CD8-positive, alpha-beta T cell (primary cell): ENCODE measurements at regions of chr16 and their contacts with region 1.

Region 1: GRCh38 chr16:1983544-1984346 is at the start of gene GFER:
- DNase-seq: peak; percentile 29 to 84 (median 57)
- ATAC-seq: peak; percentile 79
- H3K4me3 ChIP-seq: peak within 1 kb of the TSS; percentile 60 to 71
- H3K4me3 Mint-ChIP-seq: peak within 1 kb of the TSS; percentile 82
- H3K27ac ChIP-seq: peak within 1 kb of the TSS; percentile 48 to 64
- H3K27ac Mint-ChIP-seq: peak within 1 kb of the TSS; percentile 66
- H3K4me1 ChIP-seq: peaks cover 15% of the 10 kb centered on the region
- H3K4me1 Mint-ChIP-seq: peaks cover 16% of the 10 kb centered on the region
- H3K27me3 ChIP-seq: peaks cover 12 to 30% of the 10 kb centered on the region in 2 experiments
- H3K27me3 Mint-ChIP-seq: peaks cover 22% of the 10 kb centered on the region
- CTCF ChIP-seq: no peak
- total RNA-seq, gene GFER: 15.6 to 16.1 TPM

Region 2: GRCh38 chr16:1863681-1864460 is 119.9 kb before region 1 on chr16:
- CTCF ChIA-PET with region 1: no interaction called
- POLR2A ChIA-PET with region 1: no interaction called
- intact Hi-C with region 1: no loop called
- DNase-seq: peak in 2 of 9 experiments; percentile 51 to 70
- ATAC-seq: peak; percentile 34
- H3K4me3 ChIP-seq: no peak overlapping the region
- H3K4me3 Mint-ChIP-seq: no peak overlapping the region
- H3K27ac ChIP-seq: no peak overlapping the region
- H3K27ac Mint-ChIP-seq: no peak overlapping the region
- H3K4me1 ChIP-seq: no peaks in the 10 kb centered on the region
- H3K4me1 Mint-ChIP-seq: no peaks in the 10 kb centered on the region
- H3K27me3 ChIP-seq: peaks cover 2 to 8% of the 10 kb centered on the region in 2 experiments
- H3K27me3 Mint-ChIP-seq: peaks cover 11% of the 10 kb centered on the region
- CTCF ChIP-seq: peak; percentile 81

Region 3: GRCh38 chr16:1959269-1960049 is 24.3 kb before region 1 on chr16 and contains the start of gene NDUFB10:
- CTCF ChIA-PET with region 1: no interaction called
- POLR2A ChIA-PET with region 1: interaction called, 15 read pairs
- intact Hi-C with region 1: loop called in 1 of 2 experiments (anchors 1 kb)
- DNase-seq: peak; percentile 80 to 96 (median 92)
- ATAC-seq: peak; percentile 86
- H3K4me3 ChIP-seq: peak within 1 kb of the TSS; percentile 91 to 95
- H3K4me3 Mint-ChIP-seq: peak within 1 kb of the TSS; percentile 90
- H3K27ac ChIP-seq: peak within 1 kb of the TSS; percentile 75 to 80
- H3K27ac Mint-ChIP-seq: peak within 1 kb of the TSS; percentile 89
- H3K4me1 ChIP-seq: peaks cover 39% of the 10 kb centered on the region
- H3K4me1 Mint-ChIP-seq: peaks cover 39% of the 10 kb centered on the region
- H3K27me3 ChIP-seq: no peaks in the 10 kb centered on the region
- H3K27me3 Mint-ChIP-seq: no peaks in the 10 kb centered on the region
- CTCF ChIP-seq: peak; percentile 59
- total RNA-seq, gene NDUFB10: 36.2 to 38.4 TPM

Region 4: DNA sequence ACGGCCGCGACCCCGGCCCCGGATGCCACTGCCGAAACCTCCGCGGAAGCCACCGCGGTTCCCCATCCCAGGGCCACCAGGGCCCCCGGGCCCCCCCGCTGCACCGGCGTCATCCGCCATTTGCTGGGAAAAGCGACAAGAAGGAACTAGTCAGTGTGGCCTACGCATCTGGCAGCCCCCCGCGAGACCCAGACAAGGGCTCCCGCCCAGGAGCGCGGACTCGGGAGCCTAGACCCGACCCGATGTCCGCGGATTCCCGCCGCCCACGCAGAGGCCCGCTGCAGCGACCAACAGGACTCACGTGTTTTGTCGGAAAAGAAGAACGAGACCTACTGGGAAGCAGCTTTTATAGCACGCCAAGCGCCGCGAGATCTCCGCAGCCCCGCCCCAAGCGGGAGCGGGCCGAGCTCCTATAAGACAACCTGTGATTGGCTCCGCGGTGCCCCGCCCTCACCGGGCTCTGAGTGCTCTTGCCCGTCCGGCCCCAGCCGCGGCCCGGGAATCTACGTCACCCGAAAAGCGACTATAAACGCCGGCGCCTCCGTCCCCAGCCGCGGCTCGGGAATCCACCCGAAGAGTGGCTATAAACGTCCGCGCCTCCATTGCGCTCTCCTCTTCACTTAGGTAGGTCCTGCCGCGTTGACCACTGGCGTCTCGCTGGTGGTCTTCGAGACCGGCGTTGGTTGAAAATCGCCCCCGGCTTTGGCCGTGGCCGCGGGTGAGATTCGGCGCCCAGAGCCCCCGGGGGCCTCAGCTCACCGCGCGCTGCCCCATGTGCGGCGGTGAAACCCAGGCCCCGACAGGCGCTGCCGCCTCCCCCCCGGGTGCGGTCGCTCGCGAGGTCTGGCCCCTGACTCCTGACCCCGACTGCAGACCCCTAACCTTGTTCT is 19.0 kb before region 1 on chr16 and contains the start of gene RPS2:
- CTCF ChIA-PET with region 1: no interaction called
- POLR2A ChIA-PET with region 1: interaction called, 15 read pairs
- intact Hi-C with region 1: loop called in 1 of 2 experiments (anchors 1 kb)
- DNase-seq: peak; percentile 92 to 99 (median 98)
- ATAC-seq: peak; percentile 89
- H3K4me3 ChIP-seq: peak within 1 kb of the TSS; percentile 82 to 99
- H3K4me3 Mint-ChIP-seq: peak within 1 kb of the TSS; percentile 94
- H3K27ac ChIP-seq: peak within 1 kb of the TSS; percentile 98 to 99
- H3K27ac Mint-ChIP-seq: peak within 1 kb of the TSS; percentile 96
- H3K4me1 ChIP-seq: peaks cover 41% of the 10 kb centered on the region
- H3K4me1 Mint-ChIP-seq: peaks cover 45% of the 10 kb centered on the region
- H3K27me3 ChIP-seq: no peaks in the 10 kb centered on the region
- H3K27me3 Mint-ChIP-seq: no peaks in the 10 kb centered on the region
- CTCF ChIP-seq: no peak
- total RNA-seq, gene RPS2: 4,060 to 4,094 TPM